Sciatic nerve (tissue), 2 donors: ENCODE measurements at regions of chr1 and their contacts with region 1.

Region 1: DNA sequence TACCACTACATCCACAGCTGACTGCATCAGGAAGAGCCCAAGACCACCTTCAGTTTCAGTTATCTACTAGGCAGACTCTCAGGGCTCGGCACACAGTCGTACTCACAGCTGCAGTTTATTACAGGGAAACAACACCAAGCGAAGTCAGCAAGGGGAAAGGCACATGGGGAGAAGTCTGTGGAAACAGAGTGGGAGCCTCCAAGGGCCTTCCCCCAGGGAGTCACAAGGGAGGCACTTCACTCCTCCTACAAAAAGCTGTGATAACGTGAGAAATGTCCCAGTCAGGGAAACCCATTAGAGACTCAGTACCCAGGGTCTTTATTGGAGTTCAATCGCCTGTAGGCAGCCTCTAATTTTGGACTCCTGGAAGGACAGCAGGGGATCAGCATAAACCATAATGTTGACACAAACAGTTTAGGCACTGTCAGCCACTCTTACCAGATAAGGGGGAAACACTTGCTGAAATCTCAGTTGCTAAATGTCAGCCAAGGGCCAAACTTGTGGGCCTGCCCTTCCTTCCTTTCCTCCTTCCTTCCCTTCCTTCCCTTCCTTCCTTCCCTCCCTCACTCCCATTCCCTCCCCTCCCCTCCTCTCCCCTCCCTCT is 444.0 kb downstream of the SMYD3 start:
- DNase-seq: no peak
- ATAC-seq: no peak

Region 2: GRCh38 chr1:246809473-246809872 is 746.4 kb after region 1 on chr1:
- intact Hi-C with region 1: loop called (anchors 5 kb)
- DNase-seq: no peak
- ATAC-seq: no peak

Region 3: DNA sequence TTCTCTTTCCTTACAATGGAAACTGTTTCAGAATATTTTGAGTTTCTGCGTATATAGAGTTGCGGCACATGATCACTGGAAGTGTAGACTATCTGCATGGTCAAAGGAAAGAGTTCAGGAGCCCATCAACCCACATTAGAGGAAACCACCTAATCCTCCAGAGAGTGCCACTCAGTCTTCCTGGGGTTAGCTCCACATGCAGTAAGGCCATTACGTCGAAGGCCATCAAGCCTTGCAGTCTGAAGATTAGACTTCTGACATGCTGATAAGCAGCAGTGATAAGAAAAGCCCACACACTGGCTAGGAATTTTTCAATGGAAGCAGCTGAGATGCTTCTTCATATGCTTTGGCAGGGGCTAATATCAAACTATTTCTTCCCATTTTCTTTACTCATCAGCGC is 1033.4 kb after region 1 on chr1:
- intact Hi-C with region 1: no loop called
- DNase-seq: no peak
- ATAC-seq: no peak